Activated CD4-positive, alpha-beta memory T cell treated with anti-CD3 and anti-CD28 coated beads for 36 hours (primary cell): ENCODE measurements at regions of chr13 and their contacts with region 1.

Region 1: GRCh38 chr13:98576963-98577822 is at the start of gene STK24:
- DNase-seq: peak; percentile 66
- H3K4me3 Mint-ChIP-seq: peak within 1 kb of the TSS; percentile 87
- H3K27ac Mint-ChIP-seq: peak within 1 kb of the TSS; percentile 98
- H3K4me1 Mint-ChIP-seq: peaks cover 40% of the 10 kb centered on the region
- H3K27me3 Mint-ChIP-seq: no peaks in the 10 kb centered on the region
- total RNA-seq, gene STK24: 176 to 178 TPM

Region 2: GRCh38 chr13:98476538-98476966 is 100.6 kb before region 1 on chr13:
- CTCF ChIA-PET with region 1: no interaction called
- POLR2A ChIA-PET with region 1: interaction called, 4 read pairs
- intact Hi-C with region 1: loop called (anchors 1 kb)
- DNase-seq: peak; percentile 96
- H3K4me3 Mint-ChIP-seq: peak overlapping the region; percentile 62
- H3K27ac Mint-ChIP-seq: peak overlapping the region; percentile 91
- H3K4me1 Mint-ChIP-seq: peaks cover 62% of the 10 kb centered on the region
- H3K27me3 Mint-ChIP-seq: no peaks in the 10 kb centered on the region

Region 3: DNA sequence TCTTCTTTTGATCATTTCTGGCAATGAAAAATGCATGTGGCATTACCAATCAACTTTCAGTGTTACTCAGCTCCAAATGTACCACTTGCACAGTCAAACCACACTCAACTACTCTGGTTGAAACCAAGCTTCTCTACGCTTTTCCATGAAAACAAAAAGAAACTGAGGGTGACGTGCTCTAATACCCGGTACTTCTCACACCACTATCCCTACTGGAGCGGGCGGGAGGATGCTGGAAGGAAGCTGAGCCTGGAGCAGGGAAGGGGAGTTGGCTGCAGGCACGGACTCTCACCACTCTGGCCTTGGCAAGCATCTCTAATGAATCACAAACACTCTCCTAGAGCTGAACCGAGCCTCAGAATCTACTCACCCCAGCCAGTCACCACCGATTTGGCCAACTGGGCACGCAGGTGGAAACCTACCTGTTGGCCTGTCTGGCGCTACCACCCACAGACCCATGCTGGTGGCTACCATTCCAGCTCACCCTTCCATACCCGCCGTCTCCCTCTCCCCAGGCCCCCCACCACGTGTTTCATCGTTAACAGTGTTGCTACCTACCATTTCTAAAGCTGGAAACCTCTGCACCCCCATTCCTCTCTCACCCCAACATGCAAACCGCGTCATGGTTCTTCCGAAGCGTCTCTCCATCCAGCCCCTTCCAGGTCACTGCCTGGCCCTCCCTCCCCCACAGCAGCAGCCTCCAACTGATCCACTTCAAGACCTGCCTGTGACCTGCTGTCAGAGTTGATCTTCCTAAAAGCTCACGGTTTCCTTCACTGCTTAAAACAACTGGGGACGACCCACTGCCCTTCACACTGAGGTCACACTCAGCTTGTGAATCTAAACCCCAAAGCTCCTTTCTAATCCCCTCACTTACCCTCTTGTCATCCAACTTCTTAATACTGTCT is 48.3 kb before region 1 on chr13:
- CTCF ChIA-PET with region 1: no interaction called
- POLR2A ChIA-PET with region 1: interaction called, 14 read pairs
- intact Hi-C with region 1: loop called (anchors 1 kb)
- DNase-seq: peak; percentile 56
- H3K4me3 Mint-ChIP-seq: peak overlapping the region; percentile 62
- H3K27ac Mint-ChIP-seq: peak overlapping the region; percentile 89
- H3K4me1 Mint-ChIP-seq: peaks cover 95% of the 10 kb centered on the region
- H3K27me3 Mint-ChIP-seq: no peaks in the 10 kb centered on the region

Region 4: GRCh38 chr13:98565726-98566565 is 11.2 kb before region 1 on chr13:
- CTCF ChIA-PET with region 1: no interaction called
- POLR2A ChIA-PET with region 1: interaction called, 15 read pairs
- intact Hi-C with region 1: loop called (anchors 1 kb)
- DNase-seq: no peak
- H3K4me3 Mint-ChIP-seq: peak overlapping the region; percentile 54
- H3K27ac Mint-ChIP-seq: peak overlapping the region; percentile 98
- H3K4me1 Mint-ChIP-seq: peaks cover 88% of the 10 kb centered on the region
- H3K27me3 Mint-ChIP-seq: no peaks in the 10 kb centered on the region

Region 5: GRCh38 chr13:98664039-98664438 is 86.8 kb after region 1 on chr13:
- CTCF ChIA-PET with region 1: no interaction called
- POLR2A ChIA-PET with region 1: interaction called, 4 read pairs
- intact Hi-C with region 1: loop called (anchors 1 kb)
- DNase-seq: peak; percentile 87
- H3K4me3 Mint-ChIP-seq: no peak overlapping the region
- H3K27ac Mint-ChIP-seq: peak overlapping the region; percentile 56
- H3K4me1 Mint-ChIP-seq: peaks cover 16% of the 10 kb centered on the region
- H3K27me3 Mint-ChIP-seq: peaks cover 9% of the 10 kb centered on the region

Region 6: GRCh38 chr13:98677398-98677797 is 100.2 kb after region 1 on chr13:
- CTCF ChIA-PET with region 1: no interaction called
- POLR2A ChIA-PET with region 1: no interaction called
- intact Hi-C with region 1: no loop called
- DNase-seq: no peak
- H3K4me3 Mint-ChIP-seq: no peak overlapping the region
- H3K27ac Mint-ChIP-seq: no peak overlapping the region
- H3K4me1 Mint-ChIP-seq: no peaks in the 10 kb centered on the region
- H3K27me3 Mint-ChIP-seq: no peaks in the 10 kb centered on the region

Region 7: GRCh38 chr13:99307648-99308339 is 730.6 kb after region 1 on chr13:
- CTCF ChIA-PET with region 1: no interaction called
- POLR2A ChIA-PET with region 1: interaction called, 3 read pairs
- intact Hi-C with region 1: loop called (anchors 10 kb)
- DNase-seq: peak; percentile 91
- H3K4me3 Mint-ChIP-seq: peak overlapping the region; percentile 93
- H3K27ac Mint-ChIP-seq: peak overlapping the region; percentile 99
- H3K4me1 Mint-ChIP-seq: peaks cover 72% of the 10 kb centered on the region
- H3K27me3 Mint-ChIP-seq: no peaks in the 10 kb centered on the region